ENCODE measurements at regions of chr13 and their contacts with region 1.

Region 1: DNA sequence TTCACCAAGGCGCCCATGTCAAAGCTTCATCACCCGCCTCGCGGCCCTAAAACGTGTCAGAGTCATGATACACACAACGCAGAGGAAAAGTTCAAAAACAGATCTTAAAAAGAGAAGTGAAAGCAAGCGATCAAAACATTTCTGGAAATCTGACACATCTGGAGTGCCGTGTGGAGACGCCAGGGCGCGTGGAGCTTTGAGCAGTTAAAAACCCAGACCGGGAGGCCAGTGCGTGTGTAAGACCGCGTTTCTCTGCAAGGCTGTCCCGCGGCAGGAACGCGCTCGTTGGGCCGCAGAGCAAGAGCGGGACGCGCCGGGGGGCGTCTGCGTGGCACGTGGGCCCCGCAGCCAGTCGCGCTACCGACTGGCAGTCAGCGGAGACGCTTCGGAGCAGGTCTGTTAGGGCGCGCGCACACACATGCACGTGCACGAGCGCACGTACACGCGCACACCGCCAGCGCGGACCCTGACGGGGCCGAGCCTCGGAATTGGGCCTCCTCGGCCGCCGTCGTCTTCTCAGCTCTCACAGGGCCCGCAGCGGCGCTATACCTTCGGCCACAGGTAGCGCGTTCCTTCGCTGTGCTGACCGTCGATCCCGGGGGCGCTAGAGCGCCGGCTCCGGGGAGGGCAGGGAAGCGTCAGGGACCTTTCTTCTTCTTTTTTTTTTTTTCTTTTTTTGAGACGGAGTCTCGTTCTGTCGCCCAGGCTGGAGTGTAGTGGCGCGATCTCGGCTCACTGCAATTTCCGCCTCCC is 35.8 kb downstream of the RNF6 start:
- DNase-seq: peak; percentile 83 to 86
- H3K4me3 ChIP-seq: peak overlapping the region; percentile 60 to 67
- H3K27ac ChIP-seq: peak overlapping the region; percentile 81 to 93
- H3K4me1 ChIP-seq: no peaks in the 10 kb centered on the region
- H3K27me3 ChIP-seq: no peaks in the 10 kb centered on the region
- CTCF ChIP-seq: peak; percentile 20 to 60 (median 34)
- POLR2A ChIP-seq: peak in 1 of 2 donors; percentile 40

Region 2: DNA sequence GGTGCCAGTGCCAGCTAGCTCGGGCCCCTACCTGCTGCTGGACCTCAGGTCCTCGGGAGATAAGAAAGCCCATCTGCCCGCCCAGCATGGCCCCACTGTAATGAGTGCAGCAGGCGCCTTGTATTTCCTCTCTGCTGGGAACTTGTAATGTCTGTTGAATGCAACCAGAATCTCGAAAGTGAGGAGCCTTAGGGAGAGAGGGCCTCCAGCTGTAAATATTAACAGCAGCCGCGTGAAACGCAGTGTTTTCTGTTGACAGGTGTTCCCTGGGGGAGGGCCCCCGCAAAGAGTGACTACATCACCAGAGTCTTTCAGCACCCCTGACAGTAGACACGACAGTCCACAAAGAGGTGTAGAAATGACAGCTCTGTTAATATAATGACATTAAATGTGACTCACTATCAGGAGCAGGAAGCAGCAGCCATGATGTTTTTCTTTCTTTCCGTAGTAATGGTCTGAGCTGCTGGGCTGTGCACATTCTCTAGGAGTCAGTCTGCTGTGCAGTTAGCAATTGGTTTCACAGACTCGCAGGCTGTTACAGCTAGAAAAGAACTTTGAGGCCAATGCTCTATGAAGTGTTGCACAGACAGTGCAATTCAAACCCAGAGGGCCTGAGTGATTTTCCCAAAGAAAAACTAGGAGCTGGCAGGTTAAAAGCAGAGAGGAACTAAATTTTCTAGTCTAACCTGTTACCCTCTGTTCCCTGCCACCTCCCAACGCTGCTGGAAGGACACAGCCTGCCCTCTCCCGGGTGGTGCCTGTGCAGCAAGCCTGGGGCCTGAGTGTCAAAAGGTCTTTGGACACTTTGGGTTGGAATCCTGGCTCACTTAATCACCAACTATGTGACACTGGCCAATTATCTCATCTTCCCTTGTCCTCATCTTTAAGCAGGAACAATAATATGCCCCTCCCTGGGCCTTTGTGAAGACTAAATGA is 312.6 kb after region 1 on chr13:
- intact Hi-C with region 1: loop called (anchors 10 kb)
- DNase-seq: no peak
- H3K4me3 ChIP-seq: no peak overlapping the region
- H3K27ac ChIP-seq: no peak overlapping the region
- H3K4me1 ChIP-seq: no peaks in the 10 kb centered on the region
- H3K27me3 ChIP-seq: no peaks in the 10 kb centered on the region
- CTCF ChIP-seq: no peak
- POLR2A ChIP-seq: no peak

Region 3: GRCh38 chr13:26698392-26699196 is 512.3 kb after region 1 on chr13:
- intact Hi-C with region 1: loop called (anchors 5 kb)
- DNase-seq: peak; percentile 81 to 88
- H3K4me3 ChIP-seq: peak overlapping the region in 1 of 2 donors; percentile 19
- H3K27ac ChIP-seq: no peak overlapping the region
- H3K4me1 ChIP-seq: no peaks in the 10 kb centered on the region
- H3K27me3 ChIP-seq: no peaks in the 10 kb centered on the region
- CTCF ChIP-seq: peak; percentile 90 to 96 (median 94)
- POLR2A ChIP-seq: no peak

Measured in uterus (tissue), 4 donors.